Naive thymus-derived CD4-positive, alpha-beta T cell (primary cell): ENCODE measurements at regions of chr12 and their contacts with region 1.

Region 1: DNA sequence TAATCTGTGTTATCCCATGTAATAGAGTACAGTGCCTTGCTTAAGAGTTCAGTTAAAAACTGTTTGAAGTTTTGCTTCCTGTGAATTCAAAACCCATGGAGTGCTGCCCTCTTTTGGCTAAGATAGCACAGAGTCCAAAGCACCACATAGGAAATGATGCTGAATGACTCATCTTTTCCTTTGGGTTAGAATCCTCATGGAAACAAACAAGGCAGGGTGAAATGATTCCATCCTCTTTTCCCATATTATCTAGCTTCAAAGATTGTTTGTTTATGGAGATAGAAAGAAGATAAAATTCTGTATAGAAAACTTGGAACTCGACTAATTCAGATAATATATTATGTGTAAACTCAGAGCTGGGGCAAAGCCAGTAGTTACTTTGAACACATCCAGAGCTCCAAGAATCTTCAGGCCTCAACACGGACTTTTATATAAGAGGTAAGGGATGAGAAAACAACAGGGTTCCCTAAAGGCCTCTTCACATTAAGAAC is 87.4 kb downstream of the OTOGL start:
- DNase-seq: peak in 7 of 9 donors; percentile 5 to 40 (median 25)
- ATAC-seq: peak; percentile 76
- H3K4me3 ChIP-seq: no peak overlapping the region
- H3K4me3 Mint-ChIP-seq: no peak overlapping the region
- H3K27ac ChIP-seq: no peak overlapping the region
- H3K27ac Mint-ChIP-seq: no peak overlapping the region
- H3K4me1 ChIP-seq: no peaks in the 10 kb centered on the region
- H3K4me1 Mint-ChIP-seq: peaks cover 0 to 13% (median 0%) of the 10 kb centered on the region in 7 donors
- H3K27me3 ChIP-seq: no peaks in the 10 kb centered on the region
- H3K27me3 Mint-ChIP-seq: peaks cover 0 to 11% (median 2%) of the 10 kb centered on the region in 5 donors

Region 2: DNA sequence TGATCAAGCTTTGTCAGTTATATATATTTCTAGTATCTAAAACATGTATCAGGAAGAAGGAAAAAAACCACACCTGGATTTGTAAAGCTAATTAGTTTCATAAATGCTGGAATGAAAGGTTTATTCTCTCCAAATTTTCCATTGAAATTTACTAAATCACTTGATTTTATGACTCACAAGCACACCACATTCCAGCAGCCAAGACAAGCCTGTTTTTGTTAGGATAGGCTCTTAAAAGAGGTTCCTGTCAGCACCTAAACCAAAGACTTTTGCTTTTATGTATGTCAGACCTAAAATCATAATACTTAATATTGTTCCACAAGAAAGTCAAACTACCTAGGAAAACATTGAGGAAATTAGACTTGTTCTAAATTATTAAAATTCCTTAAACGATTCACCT is 410.7 kb before region 1 on chr12:
- CTCF ChIA-PET with region 1: no interaction called
- POLR2A ChIA-PET with region 1: no interaction called
- intact Hi-C with region 1: loop called in 1 of 2 experiments (anchors 5 kb)
- DNase-seq: no peak
- ATAC-seq: no peak
- H3K4me3 ChIP-seq: no peak overlapping the region
- H3K4me3 Mint-ChIP-seq: no peak overlapping the region
- H3K27ac ChIP-seq: no peak overlapping the region
- H3K27ac Mint-ChIP-seq: no peak overlapping the region
- H3K4me1 ChIP-seq: no peaks in the 10 kb centered on the region
- H3K4me1 Mint-ChIP-seq: no peaks in the 10 kb centered on the region
- H3K27me3 ChIP-seq: no peaks in the 10 kb centered on the region
- H3K27me3 Mint-ChIP-seq: no peaks in the 10 kb centered on the region

Region 3: DNA sequence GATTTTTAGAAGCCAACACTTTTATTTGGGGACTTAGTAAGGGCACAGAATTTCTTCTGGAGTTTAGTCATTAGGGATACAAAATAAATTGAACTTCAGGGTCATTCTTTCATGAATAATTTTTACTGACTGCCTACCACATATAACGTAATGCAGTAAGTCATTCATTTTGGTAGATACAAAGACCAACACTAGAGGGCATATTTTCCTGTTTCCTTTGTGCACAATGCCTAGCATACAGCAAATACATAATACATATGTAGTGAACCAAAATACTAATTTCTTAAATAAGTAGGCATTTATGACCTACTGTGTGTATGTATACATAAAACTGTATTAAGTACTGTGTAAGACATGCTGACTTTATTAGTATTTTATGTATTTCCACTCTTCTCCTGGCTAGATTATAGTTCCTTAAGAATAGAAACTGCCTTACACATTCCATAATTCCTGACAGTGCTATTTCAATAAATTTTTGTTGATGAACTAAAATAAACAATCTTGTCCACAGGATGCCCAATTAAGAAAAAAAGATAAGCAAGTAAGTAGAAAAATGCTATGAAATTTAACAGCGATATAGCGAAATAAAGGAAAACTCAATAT is 299.8 kb before region 1 on chr12:
- CTCF ChIA-PET with region 1: interaction called, 5 read pairs
- POLR2A ChIA-PET with region 1: no interaction called
- intact Hi-C with region 1: loop called (anchors 1 kb)
- DNase-seq: peak in 6 of 9 donors; percentile 10 to 45 (median 36)
- ATAC-seq: peak; percentile 91
- H3K4me3 ChIP-seq: no peak overlapping the region
- H3K4me3 Mint-ChIP-seq: peak overlapping the region in 3 of 10 donors; percentile 10 to 28 (median 11)
- H3K27ac ChIP-seq: no peak overlapping the region
- H3K27ac Mint-ChIP-seq: peak overlapping the region in 1 of 9 donors; percentile 5
- H3K4me1 ChIP-seq: peaks cover 10 to 26% of the 10 kb centered on the region in 2 donors
- H3K4me1 Mint-ChIP-seq: peaks cover 26 to 93% (median 86%) of the 10 kb centered on the region in 7 donors
- H3K27me3 ChIP-seq: no peaks in the 10 kb centered on the region
- H3K27me3 Mint-ChIP-seq: no peaks in the 10 kb centered on the region

Region 4: GRCh38 chr12:80017261-80017870 is 169.4 kb before region 1 on chr12:
- CTCF ChIA-PET with region 1: no interaction called
- POLR2A ChIA-PET with region 1: no interaction called
- intact Hi-C with region 1: no loop called
- DNase-seq: no peak
- ATAC-seq: no peak
- H3K4me3 ChIP-seq: no peak overlapping the region
- H3K4me3 Mint-ChIP-seq: no peak overlapping the region
- H3K27ac ChIP-seq: no peak overlapping the region
- H3K27ac Mint-ChIP-seq: no peak overlapping the region
- H3K4me1 ChIP-seq: no peaks in the 10 kb centered on the region
- H3K4me1 Mint-ChIP-seq: no peaks in the 10 kb centered on the region
- H3K27me3 ChIP-seq: no peaks in the 10 kb centered on the region
- H3K27me3 Mint-ChIP-seq: peaks cover 0 to 14% (median 3%) of the 10 kb centered on the region in 5 donors

Region 5: GRCh38 chr12:80053048-80053790 is 133.6 kb before region 1 on chr12:
- CTCF ChIA-PET with region 1: interaction called, 4 read pairs
- POLR2A ChIA-PET with region 1: no interaction called
- intact Hi-C with region 1: loop called (anchors 1 kb)
- DNase-seq: no peak
- ATAC-seq: no peak
- H3K4me3 ChIP-seq: no peak overlapping the region
- H3K4me3 Mint-ChIP-seq: no peak overlapping the region
- H3K27ac ChIP-seq: no peak overlapping the region
- H3K27ac Mint-ChIP-seq: no peak overlapping the region
- H3K4me1 ChIP-seq: no peaks in the 10 kb centered on the region
- H3K4me1 Mint-ChIP-seq: peaks cover 0 to 8% (median 7%) of the 10 kb centered on the region in 7 donors
- H3K27me3 ChIP-seq: no peaks in the 10 kb centered on the region
- H3K27me3 Mint-ChIP-seq: peaks cover 0 to 14% (median 4%) of the 10 kb centered on the region in 5 donors